ENCODE measurements at regions of chr16 and their contacts with region 1.

Region 1: GRCh38 chr16:16025214-16025968 is 76.0 kb downstream of the ABCC1 start:
- DNase-seq: peak; percentile 69
- H3K4me3 Mint-ChIP-seq: no peak overlapping the region
- H3K27ac Mint-ChIP-seq: peak overlapping the region; percentile 79
- H3K4me1 Mint-ChIP-seq: peaks cover 30% of the 10 kb centered on the region
- H3K27me3 Mint-ChIP-seq: no peaks in the 10 kb centered on the region

Region 2: DNA sequence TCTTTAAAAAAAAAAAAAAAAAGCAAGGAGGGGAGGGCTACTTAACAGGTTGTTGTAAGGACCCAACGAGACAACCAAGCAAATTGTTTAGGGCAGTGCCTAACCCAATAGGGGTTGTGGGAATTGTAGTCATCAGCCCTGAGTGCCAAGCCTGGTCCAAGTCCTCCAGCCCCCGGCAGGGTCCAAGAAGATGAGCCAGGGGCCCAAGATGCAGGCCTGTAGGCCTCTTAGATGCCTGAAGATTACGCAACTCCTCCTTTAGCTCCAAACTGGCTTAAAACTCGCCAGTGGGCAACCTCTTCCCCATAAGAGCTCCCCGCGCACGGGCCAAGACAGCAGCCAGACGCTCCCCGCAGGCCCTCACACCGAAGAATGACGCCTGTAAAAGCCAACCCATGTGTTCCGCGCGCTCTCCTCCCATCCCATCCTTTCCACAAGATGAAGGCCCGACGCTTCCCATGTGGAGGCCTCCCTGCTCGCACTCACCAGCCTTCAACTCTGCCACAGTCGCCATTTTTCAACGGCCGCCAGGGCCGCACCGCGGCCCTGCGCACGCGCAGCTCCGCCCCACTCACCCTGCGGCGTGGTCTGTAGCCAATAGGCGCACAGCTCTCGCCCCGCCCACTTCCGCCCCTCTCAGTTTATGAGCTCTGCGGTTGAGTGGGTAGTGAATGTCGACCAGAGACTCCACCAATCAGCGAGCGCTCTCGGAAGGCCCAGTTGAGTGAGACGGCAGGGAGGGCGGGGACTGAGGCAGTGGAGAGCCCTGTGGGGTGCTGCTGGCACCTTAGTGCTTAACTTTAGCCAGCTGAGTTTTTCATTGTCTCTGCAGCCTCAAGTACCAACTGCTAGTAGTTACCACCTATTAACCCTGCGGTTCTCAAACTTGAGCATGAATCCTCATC is 137.1 kb before region 1 on chr16 and contains the start of gene CEP20:
- CTCF ChIA-PET with region 1: interaction called, 3 read pairs
- intact Hi-C with region 1: loop called (anchors 2 kb)
- DNase-seq: peak; percentile 100
- H3K4me3 Mint-ChIP-seq: peak within 1 kb of the TSS; percentile 100
- H3K27ac Mint-ChIP-seq: peak within 1 kb of the TSS; percentile 94
- H3K4me1 Mint-ChIP-seq: peaks cover 31% of the 10 kb centered on the region
- H3K27me3 Mint-ChIP-seq: no peaks in the 10 kb centered on the region
- total RNA-seq, gene CEP20: 49.0 to 57.0 TPM

Region 3: GRCh38 chr16:16052916-16053315 is 27.5 kb after region 1 on chr16:
- CTCF ChIA-PET with region 1: no interaction called
- intact Hi-C with region 1: no loop called
- DNase-seq: no peak
- H3K4me3 Mint-ChIP-seq: no peak overlapping the region
- H3K27ac Mint-ChIP-seq: no peak overlapping the region
- H3K4me1 Mint-ChIP-seq: no peaks in the 10 kb centered on the region
- H3K27me3 Mint-ChIP-seq: no peaks in the 10 kb centered on the region